Calu3 (cell line): ENCODE measurements at regions of chr12 and their contacts with region 1.

Region 1: DNA sequence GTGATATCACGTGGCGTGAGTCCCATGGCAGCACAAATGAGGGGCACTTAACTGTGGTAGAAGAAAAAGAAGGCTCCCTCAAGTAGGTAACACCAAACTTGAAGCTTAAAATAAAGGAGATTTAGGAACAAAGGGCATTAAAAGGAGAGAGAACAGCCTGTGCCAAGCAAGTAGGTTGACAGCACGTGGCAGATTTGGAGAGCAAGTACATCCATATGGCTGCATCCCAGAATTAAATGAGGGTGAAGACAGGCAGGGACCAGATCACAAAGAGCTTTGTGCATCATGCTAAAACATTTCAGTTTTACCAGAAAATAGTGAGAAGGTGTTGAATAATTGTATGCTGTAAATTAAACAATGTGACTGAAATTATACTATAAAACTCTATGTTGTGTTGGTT is 32.8 kb downstream of the KCNMB4 start:
- DNase-seq: no peak
- H3K4me3 Mint-ChIP-seq: no peak overlapping the region
- H3K27ac Mint-ChIP-seq: no peak overlapping the region
- H3K4me1 Mint-ChIP-seq: no peaks in the 10 kb centered on the region
- H3K27me3 Mint-ChIP-seq: no peaks in the 10 kb centered on the region
- CTCF ChIP-seq: no peak

Region 2: GRCh38 chr12:70928071-70928470 is 529.2 kb after region 1 on chr12:
- CTCF ChIA-PET with region 1: no interaction called
- intact Hi-C with region 1: loop called (anchors 5 kb)
- DNase-seq: no peak
- H3K4me3 Mint-ChIP-seq: no peak overlapping the region
- H3K27ac Mint-ChIP-seq: no peak overlapping the region
- H3K4me1 Mint-ChIP-seq: no peaks in the 10 kb centered on the region
- H3K27me3 Mint-ChIP-seq: no peaks in the 10 kb centered on the region
- CTCF ChIP-seq: no peak